B cell (primary cell): ENCODE measurements at regions of chr2 and their contacts with region 1.

Region 1: GRCh38 chr2:17309741-17310339 is 208.4 kb downstream of the RAD51AP2 start:
- DNase-seq: peak; percentile 58
- ATAC-seq: peak; percentile 76
- H3K4me3 ChIP-seq: no peak overlapping the region
- H3K4me3 Mint-ChIP-seq: no peak overlapping the region
- H3K27ac ChIP-seq: no peak overlapping the region
- H3K27ac Mint-ChIP-seq: no peak overlapping the region
- H3K4me1 ChIP-seq: no peaks in the 10 kb centered on the region
- H3K4me1 Mint-ChIP-seq: peaks cover 7% of the 10 kb centered on the region
- H3K27me3 ChIP-seq: no peaks in the 10 kb centered on the region
- H3K27me3 Mint-ChIP-seq: no peaks in the 10 kb centered on the region
- CTCF ChIP-seq: peak; percentile 77

Region 2: DNA sequence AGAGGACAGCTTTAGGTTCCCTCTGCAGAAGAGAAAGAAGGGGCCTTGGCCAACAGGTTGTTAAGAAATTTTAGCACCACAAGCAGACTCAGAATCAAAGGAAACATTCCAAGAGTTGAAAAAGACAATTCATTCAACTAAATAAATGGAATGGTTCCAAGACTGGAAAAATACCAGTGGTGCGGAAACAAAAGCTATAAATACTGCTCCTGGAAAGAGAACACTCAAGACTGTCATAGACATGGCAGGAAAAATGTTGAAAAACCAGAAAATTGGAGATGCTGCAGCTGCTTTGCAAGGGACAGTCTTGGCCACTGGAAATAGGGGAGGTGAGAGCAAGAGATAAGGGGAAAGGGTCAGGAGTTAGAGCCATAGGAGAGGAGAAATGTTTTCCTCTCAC is 331.5 kb before region 1 on chr2:
- CTCF ChIA-PET with region 1: no interaction called
- POLR2A ChIA-PET with region 1: no interaction called
- intact Hi-C with region 1: no loop called
- DNase-seq: no peak
- ATAC-seq: no peak
- H3K4me3 ChIP-seq: no peak overlapping the region
- H3K4me3 Mint-ChIP-seq: no peak overlapping the region
- H3K27ac ChIP-seq: no peak overlapping the region
- H3K27ac Mint-ChIP-seq: no peak overlapping the region
- H3K4me1 ChIP-seq: no peaks in the 10 kb centered on the region
- H3K4me1 Mint-ChIP-seq: peaks cover 6% of the 10 kb centered on the region
- H3K27me3 ChIP-seq: no peaks in the 10 kb centered on the region
- H3K27me3 Mint-ChIP-seq: no peaks in the 10 kb centered on the region
- CTCF ChIP-seq: no peak

Region 3: DNA sequence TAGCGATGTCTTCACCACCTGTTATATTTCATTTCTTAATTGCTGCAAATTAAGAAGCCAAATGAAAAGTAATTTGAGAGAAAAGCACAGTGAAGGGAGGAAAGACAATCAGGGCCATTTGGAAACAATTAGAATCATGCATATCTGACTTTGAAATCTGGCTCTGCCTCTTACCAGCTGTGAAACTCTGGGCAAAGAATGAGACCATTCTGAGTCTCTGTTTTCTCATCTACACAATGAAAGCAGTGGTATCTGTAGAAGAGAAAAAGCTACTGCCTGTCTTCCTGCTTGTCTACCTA is 309.7 kb before region 1 on chr2:
- CTCF ChIA-PET with region 1: no interaction called
- POLR2A ChIA-PET with region 1: no interaction called
- intact Hi-C with region 1: no loop called
- DNase-seq: no peak
- ATAC-seq: no peak
- H3K4me3 ChIP-seq: no peak overlapping the region
- H3K4me3 Mint-ChIP-seq: no peak overlapping the region
- H3K27ac ChIP-seq: no peak overlapping the region
- H3K27ac Mint-ChIP-seq: no peak overlapping the region
- H3K4me1 ChIP-seq: no peaks in the 10 kb centered on the region
- H3K4me1 Mint-ChIP-seq: no peaks in the 10 kb centered on the region
- H3K27me3 ChIP-seq: no peaks in the 10 kb centered on the region
- H3K27me3 Mint-ChIP-seq: no peaks in the 10 kb centered on the region
- CTCF ChIP-seq: no peak

Region 4: GRCh38 chr2:17181051-17181752 is 128.6 kb before region 1 on chr2:
- CTCF ChIA-PET with region 1: interaction called, 4 read pairs
- POLR2A ChIA-PET with region 1: no interaction called
- intact Hi-C with region 1: loop called (anchors 10 kb)
- DNase-seq: no peak
- ATAC-seq: no peak
- H3K4me3 ChIP-seq: no peak overlapping the region
- H3K4me3 Mint-ChIP-seq: no peak overlapping the region
- H3K27ac ChIP-seq: no peak overlapping the region
- H3K27ac Mint-ChIP-seq: no peak overlapping the region
- H3K4me1 ChIP-seq: peaks cover 2 to 4% of the 10 kb centered on the region in 2 donors
- H3K4me1 Mint-ChIP-seq: peaks cover 22% of the 10 kb centered on the region
- H3K27me3 ChIP-seq: no peaks in the 10 kb centered on the region
- H3K27me3 Mint-ChIP-seq: peaks cover 3% of the 10 kb centered on the region
- CTCF ChIP-seq: no peak